B cell (primary cell): ENCODE measurements at regions of chr1 and their contacts with region 1.

Region 1: GRCh38 chr1:208245185-208245705 is 1.1 kb upstream of the PLXNA2 start:
- DNase-seq: peak; percentile 85
- ATAC-seq: peak; percentile 56
- H3K4me3 ChIP-seq: peak overlapping the region; percentile 49 to 93 (median 81)
- H3K4me3 Mint-ChIP-seq: peak overlapping the region; percentile 80
- H3K27ac ChIP-seq: peak overlapping the region; percentile 8 to 73
- H3K27ac Mint-ChIP-seq: peak overlapping the region; percentile 62
- H3K4me1 ChIP-seq: peaks cover 8 to 14% of the 10 kb centered on the region in 2 donors
- H3K4me1 Mint-ChIP-seq: peaks cover 11% of the 10 kb centered on the region
- H3K27me3 ChIP-seq: peaks cover 0 to 28% (median 9%) of the 10 kb centered on the region in 4 experiments
- H3K27me3 Mint-ChIP-seq: peaks cover 7% of the 10 kb centered on the region
- CTCF ChIP-seq: peak; percentile 85

Region 2: GRCh38 chr1:208019257-208019656 is 226.0 kb before region 1 on chr1:
- CTCF ChIA-PET with region 1: interaction called, 87 read pairs
- POLR2A ChIA-PET with region 1: interaction called, 8 read pairs
- intact Hi-C with region 1: loop called (anchors 1 kb)
- DNase-seq: no peak
- ATAC-seq: no peak
- H3K4me3 ChIP-seq: no peak overlapping the region
- H3K4me3 Mint-ChIP-seq: no peak overlapping the region
- H3K27ac ChIP-seq: no peak overlapping the region
- H3K27ac Mint-ChIP-seq: no peak overlapping the region
- H3K4me1 ChIP-seq: no peaks in the 10 kb centered on the region
- H3K4me1 Mint-ChIP-seq: no peaks in the 10 kb centered on the region
- H3K27me3 ChIP-seq: peaks cover 0 to 4% (median 0%) of the 10 kb centered on the region in 4 experiments
- H3K27me3 Mint-ChIP-seq: peaks cover 11% of the 10 kb centered on the region
- CTCF ChIP-seq: no peak

Region 3: DNA sequence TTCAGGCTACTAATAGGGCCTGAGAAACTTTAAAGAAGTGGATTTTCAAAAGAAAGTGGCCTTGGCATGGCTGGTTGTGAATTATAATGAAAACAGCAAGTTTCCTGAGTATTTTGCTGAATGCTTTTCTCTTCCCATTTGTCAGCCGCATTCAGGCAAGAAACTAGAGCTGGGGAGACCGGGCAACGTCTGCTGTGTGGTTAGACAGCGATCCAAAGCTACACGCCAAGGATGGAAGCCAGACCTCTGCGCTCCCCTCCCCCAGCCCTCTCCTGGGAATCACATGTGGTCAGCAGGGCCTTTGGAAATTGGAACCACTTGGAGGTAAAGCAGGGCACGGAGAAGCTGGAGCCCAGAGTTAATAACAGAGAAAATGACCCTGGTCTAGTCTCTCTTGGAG is 220.2 kb before region 1 on chr1:
- CTCF ChIA-PET with region 1: interaction called, 87 read pairs
- POLR2A ChIA-PET with region 1: interaction called, 8 read pairs
- intact Hi-C with region 1: loop called (anchors 1 kb)
- DNase-seq: no peak
- ATAC-seq: no peak
- H3K4me3 ChIP-seq: no peak overlapping the region
- H3K4me3 Mint-ChIP-seq: no peak overlapping the region
- H3K27ac ChIP-seq: no peak overlapping the region
- H3K27ac Mint-ChIP-seq: no peak overlapping the region
- H3K4me1 ChIP-seq: no peaks in the 10 kb centered on the region
- H3K4me1 Mint-ChIP-seq: no peaks in the 10 kb centered on the region
- H3K27me3 ChIP-seq: no peaks in the 10 kb centered on the region
- H3K27me3 Mint-ChIP-seq: peaks cover 4% of the 10 kb centered on the region
- CTCF ChIP-seq: no peak

Region 4: GRCh38 chr1:208132287-208132883 is 112.9 kb before region 1 on chr1:
- CTCF ChIA-PET with region 1: interaction called, 26 read pairs
- POLR2A ChIA-PET with region 1: no interaction called
- intact Hi-C with region 1: no loop called
- DNase-seq: peak; percentile 48
- ATAC-seq: peak; percentile 54
- H3K4me3 ChIP-seq: no peak overlapping the region
- H3K4me3 Mint-ChIP-seq: no peak overlapping the region
- H3K27ac ChIP-seq: no peak overlapping the region
- H3K27ac Mint-ChIP-seq: no peak overlapping the region
- H3K4me1 ChIP-seq: peaks cover 4 to 6% of the 10 kb centered on the region in 2 donors
- H3K4me1 Mint-ChIP-seq: peaks cover 8% of the 10 kb centered on the region
- H3K27me3 ChIP-seq: peaks cover 0 to 4% (median 0%) of the 10 kb centered on the region in 4 experiments
- H3K27me3 Mint-ChIP-seq: peaks cover 25% of the 10 kb centered on the region
- CTCF ChIP-seq: peak; percentile 71

Region 5: GRCh38 chr1:208374391-208374941 is 129.2 kb after region 1 on chr1:
- CTCF ChIA-PET with region 1: no interaction called
- POLR2A ChIA-PET with region 1: no interaction called
- intact Hi-C with region 1: no loop called
- DNase-seq: no peak
- ATAC-seq: no peak
- H3K4me3 ChIP-seq: no peak overlapping the region
- H3K4me3 Mint-ChIP-seq: no peak overlapping the region
- H3K27ac ChIP-seq: no peak overlapping the region
- H3K27ac Mint-ChIP-seq: no peak overlapping the region
- H3K4me1 ChIP-seq: no peaks in the 10 kb centered on the region
- H3K4me1 Mint-ChIP-seq: no peaks in the 10 kb centered on the region
- H3K27me3 ChIP-seq: no peaks in the 10 kb centered on the region
- H3K27me3 Mint-ChIP-seq: peaks cover 19% of the 10 kb centered on the region
- CTCF ChIP-seq: no peak

Region 6: GRCh38 chr1:208885060-208885459 is 639.8 kb after region 1 on chr1:
- CTCF ChIA-PET with region 1: no interaction called
- POLR2A ChIA-PET with region 1: no interaction called
- intact Hi-C with region 1: no loop called
- DNase-seq: no peak
- ATAC-seq: no peak
- H3K4me3 ChIP-seq: no peak overlapping the region
- H3K4me3 Mint-ChIP-seq: no peak overlapping the region
- H3K27ac ChIP-seq: no peak overlapping the region
- H3K27ac Mint-ChIP-seq: no peak overlapping the region
- H3K4me1 ChIP-seq: no peaks in the 10 kb centered on the region
- H3K4me1 Mint-ChIP-seq: no peaks in the 10 kb centered on the region
- H3K27me3 ChIP-seq: no peaks in the 10 kb centered on the region
- H3K27me3 Mint-ChIP-seq: no peaks in the 10 kb centered on the region
- CTCF ChIP-seq: no peak